Left cardiac atrium (tissue), 4 donors: ENCODE measurements at regions of chr20 and their contacts with region 1.

Region 1: GRCh38 chr20:50120897-50121693 is 8.1 kb upstream of the UBE2V1 start:
- DNase-seq: peak; percentile 64
- ATAC-seq: peak; percentile 74 to 79

Region 2: DNA sequence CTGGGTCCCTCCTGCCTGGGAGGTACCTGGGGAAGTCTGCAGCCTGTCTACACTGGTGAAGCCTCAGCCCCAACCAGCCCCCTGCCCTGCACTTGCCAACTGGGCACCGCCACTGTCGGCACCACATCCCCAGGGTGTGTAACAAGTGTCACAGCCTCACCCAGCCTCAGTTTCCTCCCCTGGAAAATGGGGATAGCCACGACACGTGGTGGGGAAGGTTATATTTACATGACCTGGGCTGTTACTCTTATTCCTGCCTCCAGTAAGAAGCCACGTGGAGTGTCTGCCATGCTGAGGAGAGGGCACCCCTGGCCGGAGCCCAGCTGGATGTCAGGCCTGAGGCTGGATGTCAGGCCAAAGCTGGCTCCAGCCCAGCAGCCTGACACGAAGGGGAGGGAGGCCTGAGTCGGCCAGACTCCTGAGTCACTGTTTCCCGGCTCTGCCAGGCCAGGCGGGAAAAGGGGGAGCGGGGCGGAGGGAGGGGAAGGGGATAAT is 93.4 kb before region 1 on chr20:
- intact Hi-C with region 1: no loop called
- DNase-seq: peak; percentile 92
- ATAC-seq: peak; percentile 86 to 90

Region 3: GRCh38 chr20:50169329-50169831 is 48.3 kb after region 1 on chr20:
- intact Hi-C with region 1: loop called (anchors 1 to 5 kb)
- DNase-seq: peak; percentile 74
- ATAC-seq: peak in 1 of 2 donors; percentile 3